Psoas muscle (tissue), 8 donors: ENCODE measurements at regions of chr12 and their contacts with region 1.

Region 1: GRCh38 chr12:14803011-14803829 is at the starts of genes C12orf60 and WBP11:
- DNase-seq: peak; percentile 91 to 94
- ATAC-seq: peak; percentile 99 to 100 (median 100)
- H3K4me3 ChIP-seq: peak within 1 kb of the TSS; percentile 94
- H3K27ac ChIP-seq: peak within 1 kb of the TSS; percentile 94
- H3K4me1 ChIP-seq: peaks cover 23% of the 10 kb centered on the region
- H3K27me3 ChIP-seq: no peaks in the 10 kb centered on the region
- CTCF ChIP-seq: no peak
- total RNA-seq, gene C12orf60: 0.78 to 2.3 (median 1.6) TPM
- total RNA-seq, gene WBP11: 34.6 to 68.0 (median 58.3) TPM

Region 2: GRCh38 chr12:14774066-14774905 is 28.9 kb before region 1 on chr12:
- intact Hi-C with region 1: loop called in 1 of 2 experiments (anchors 2 kb)
- DNase-seq: peak; percentile 94 to 97
- ATAC-seq: peak; percentile 79 to 84 (median 82)
- H3K4me3 ChIP-seq: peak overlapping the region; percentile 86
- H3K27ac ChIP-seq: peak overlapping the region; percentile 91
- H3K4me1 ChIP-seq: peaks cover 11% of the 10 kb centered on the region
- H3K27me3 ChIP-seq: no peaks in the 10 kb centered on the region
- CTCF ChIP-seq: no peak

Region 3: DNA sequence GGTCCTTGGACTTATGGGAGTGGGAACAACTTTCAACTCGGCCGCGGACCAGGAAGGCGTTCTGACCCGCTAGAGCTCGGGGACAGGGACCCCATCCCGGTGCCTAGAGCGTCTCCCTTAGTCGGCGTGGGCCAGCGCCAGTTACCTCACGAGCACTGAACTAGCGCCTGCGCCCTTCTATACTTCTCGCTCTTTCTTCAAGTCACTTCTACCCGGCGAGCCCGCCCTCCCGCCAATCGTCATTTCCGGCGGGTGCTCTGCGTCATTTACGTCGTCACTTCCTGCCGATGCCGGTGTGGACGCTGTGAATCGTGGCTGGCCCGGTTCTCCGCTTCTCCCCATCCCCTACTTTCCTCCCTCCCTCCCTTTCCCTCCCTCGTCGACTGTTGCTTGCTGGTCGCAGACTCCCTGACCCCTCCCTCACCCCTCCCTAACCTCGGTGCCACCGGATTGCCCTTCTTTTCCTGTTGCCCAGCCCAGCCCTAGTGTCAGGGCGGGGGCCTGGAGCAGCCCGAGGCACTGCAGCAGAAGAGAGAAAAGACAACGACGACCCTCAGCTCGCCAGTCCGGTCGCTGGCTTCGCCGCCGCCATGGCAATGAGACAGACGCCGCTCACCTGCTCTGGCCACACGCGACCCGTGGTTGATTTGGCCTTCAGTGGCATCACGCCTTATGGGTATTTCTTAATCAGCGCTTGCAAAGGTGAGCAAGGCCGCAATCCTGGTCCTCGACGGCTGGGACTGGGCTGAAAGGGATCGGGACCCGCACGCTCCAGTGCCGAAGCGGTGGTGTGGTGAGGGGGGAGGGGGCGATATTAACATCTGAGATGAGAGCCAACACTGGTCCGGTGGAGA is 1079.1 kb after region 1 on chr12 and contains the start of gene STRAP:
- intact Hi-C with region 1: loop called in 1 of 2 experiments (anchors 10 kb)
- DNase-seq: peak; percentile 96 to 98
- ATAC-seq: peak; percentile 97
- H3K4me3 ChIP-seq: peak within 1 kb of the TSS; percentile 89
- H3K27ac ChIP-seq: peak within 1 kb of the TSS; percentile 97
- H3K4me1 ChIP-seq: peaks cover 34% of the 10 kb centered on the region
- H3K27me3 ChIP-seq: no peaks in the 10 kb centered on the region
- CTCF ChIP-seq: no peak
- total RNA-seq, gene STRAP: 94.3 to 154 (median 151) TPM